ENCODE measurements at regions of chr17 and their contacts with region 1.

Region 1: DNA sequence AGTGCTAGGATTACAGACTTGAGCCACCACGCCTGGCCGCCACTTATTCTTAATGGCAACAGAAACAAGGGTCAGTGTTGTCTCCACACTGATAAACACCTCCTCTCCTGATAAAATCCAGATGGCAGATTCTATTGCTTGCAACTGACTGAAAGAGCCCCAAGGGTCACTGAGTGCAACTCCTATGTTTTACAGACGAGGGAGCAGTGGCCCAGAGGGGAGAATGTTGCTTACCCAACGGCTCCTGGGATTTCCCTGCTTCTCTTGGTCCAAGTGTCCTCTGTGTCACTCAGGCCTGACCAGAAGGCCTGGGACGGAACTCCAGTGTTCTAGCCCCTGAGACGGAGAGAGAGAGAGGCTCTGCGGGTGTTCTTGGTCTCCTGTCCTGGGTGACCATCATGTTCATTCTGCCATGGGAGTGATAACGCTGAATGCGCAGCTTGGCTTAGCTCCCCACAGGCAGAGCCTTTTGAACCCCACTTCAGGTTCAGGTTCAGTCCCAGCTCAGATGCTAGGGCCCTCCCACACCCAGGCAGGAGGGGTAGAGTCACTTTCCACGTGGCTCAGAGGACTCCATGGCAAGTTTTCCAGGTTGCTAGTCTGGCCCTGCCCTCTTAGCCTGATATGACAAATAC is 77.3 kb upstream of the NLRP1 start:
- DNase-seq: peak in 1 of 2 donors; percentile 72
- H3K4me3 ChIP-seq: no peak overlapping the region
- H3K27ac ChIP-seq: no peak overlapping the region
- H3K4me1 ChIP-seq: no peaks in the 10 kb centered on the region
- H3K27me3 ChIP-seq: no peaks in the 10 kb centered on the region
- CTCF ChIP-seq: no peak
- POLR2A ChIP-seq: no peak

Region 2: DNA sequence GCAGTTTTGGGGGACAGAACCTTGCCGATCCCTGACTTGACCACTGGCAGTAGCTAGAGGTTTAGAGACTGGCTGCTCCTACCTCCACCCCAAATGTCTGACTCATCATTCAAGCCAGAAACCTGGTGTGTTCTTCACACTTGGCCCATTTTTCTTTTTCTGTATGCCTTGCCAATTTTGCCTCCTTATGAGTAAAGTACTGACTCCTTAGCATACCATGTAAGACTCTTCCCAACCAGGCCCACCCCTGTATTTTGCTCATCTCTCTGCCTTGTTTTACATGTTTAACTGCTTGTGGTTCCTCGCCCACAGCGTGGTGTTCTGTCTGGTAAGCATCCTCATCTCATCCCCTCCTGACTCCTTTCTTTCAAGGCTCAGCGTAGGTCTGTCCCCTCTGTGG is 280.1 kb before region 1 on chr17:
- intact Hi-C with region 1: no loop called
- DNase-seq: no peak
- H3K4me3 ChIP-seq: no peak overlapping the region
- H3K27ac ChIP-seq: no peak overlapping the region
- H3K4me1 ChIP-seq: no peaks in the 10 kb centered on the region
- H3K27me3 ChIP-seq: no peaks in the 10 kb centered on the region
- CTCF ChIP-seq: no peak
- POLR2A ChIP-seq: no peak

Region 3: DNA sequence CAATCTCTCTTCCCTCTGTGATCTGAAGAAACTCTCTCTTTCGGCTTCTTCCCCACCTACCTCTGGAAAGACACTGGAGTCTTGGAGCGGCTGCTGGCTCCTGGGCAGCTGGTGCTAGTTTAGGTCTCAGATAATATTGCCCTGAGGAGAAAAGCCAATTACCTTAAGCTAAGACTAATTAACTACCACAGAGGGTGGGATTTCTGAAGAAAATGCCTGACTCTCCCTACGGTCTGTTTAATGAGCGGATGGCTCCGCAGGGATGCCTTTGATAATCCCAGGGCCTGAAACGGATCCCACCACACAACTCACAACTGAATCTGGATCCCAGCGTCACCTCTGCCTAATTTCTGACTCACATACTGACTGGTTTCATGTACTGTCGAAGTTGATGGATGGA is 49.7 kb after region 1 on chr17:
- intact Hi-C with region 1: loop called (anchors 5 kb)
- DNase-seq: no peak
- H3K4me3 ChIP-seq: no peak overlapping the region
- H3K27ac ChIP-seq: no peak overlapping the region
- H3K4me1 ChIP-seq: no peaks in the 10 kb centered on the region
- H3K27me3 ChIP-seq: no peaks in the 10 kb centered on the region
- CTCF ChIP-seq: no peak
- POLR2A ChIP-seq: no peak

Region 4: GRCh38 chr17:6334395-6334794 is 672.8 kb after region 1 on chr17:
- intact Hi-C with region 1: loop called (anchors 5 kb)
- DNase-seq: no peak
- H3K4me3 ChIP-seq: no peak overlapping the region
- H3K27ac ChIP-seq: no peak overlapping the region
- H3K4me1 ChIP-seq: no peaks in the 10 kb centered on the region
- H3K27me3 ChIP-seq: no peaks in the 10 kb centered on the region
- CTCF ChIP-seq: no peak
- POLR2A ChIP-seq: no peak

Measured in vagina (tissue), 2 donors.